A673 (cell line): ENCODE measurements at regions of chr6 and their contacts with region 1.

Region 1: DNA sequence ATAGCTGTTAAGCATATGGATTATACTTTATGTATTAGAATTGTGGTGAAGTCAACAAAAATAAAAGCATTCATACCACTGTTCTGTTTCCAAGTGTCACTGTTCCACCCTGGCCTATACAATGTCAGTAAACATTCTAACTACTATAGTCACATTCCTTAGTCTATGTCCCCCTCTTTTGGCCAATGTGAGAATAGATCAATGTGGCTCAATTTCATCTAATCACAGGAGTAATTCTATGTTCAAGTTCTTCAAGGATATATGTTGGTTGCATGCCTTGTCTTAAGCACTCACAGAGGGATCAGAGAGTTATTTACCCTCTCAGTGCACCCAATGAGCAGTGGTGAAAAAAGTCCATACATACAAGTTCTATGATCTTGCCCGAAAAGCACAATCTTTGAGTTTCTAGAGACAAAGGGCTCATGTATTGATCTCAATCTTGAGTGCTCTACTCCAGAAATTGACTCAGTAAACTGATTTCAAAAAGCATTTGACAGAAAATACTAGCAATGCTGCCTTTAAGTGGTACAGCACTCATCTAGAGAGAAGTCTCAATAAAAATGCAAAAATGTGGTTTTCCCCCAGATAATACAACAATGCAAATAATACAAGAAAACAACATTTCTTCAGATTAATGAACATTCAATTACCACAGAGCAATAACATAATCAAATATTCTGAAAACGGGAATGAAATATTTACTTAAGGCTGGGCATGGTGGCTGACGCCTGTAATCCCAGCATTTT is 16.5 kb downstream of the SMLR1 start:
- DNase-seq: peak; percentile 75
- H3K4me3 ChIP-seq: no peak overlapping the region
- H3K27ac ChIP-seq: no peak overlapping the region
- H3K4me1 ChIP-seq: no peaks in the 10 kb centered on the region
- H3K27me3 ChIP-seq: no peaks in the 10 kb centered on the region
- CTCF ChIP-seq: peak; percentile 68

Region 2: GRCh38 chr6:130037207-130037811 is 806.4 kb before region 1 on chr6:
- CTCF ChIA-PET with region 1: no interaction called
- POLR2A ChIA-PET with region 1: no interaction called
- intact Hi-C with region 1: loop called (anchors 10 kb)
- DNase-seq: peak; percentile 22
- H3K4me3 ChIP-seq: no peak overlapping the region
- H3K27ac ChIP-seq: no peak overlapping the region
- H3K4me1 ChIP-seq: peaks cover 13% of the 10 kb centered on the region
- H3K27me3 ChIP-seq: no peaks in the 10 kb centered on the region
- CTCF ChIP-seq: peak; percentile 64

Region 3: DNA sequence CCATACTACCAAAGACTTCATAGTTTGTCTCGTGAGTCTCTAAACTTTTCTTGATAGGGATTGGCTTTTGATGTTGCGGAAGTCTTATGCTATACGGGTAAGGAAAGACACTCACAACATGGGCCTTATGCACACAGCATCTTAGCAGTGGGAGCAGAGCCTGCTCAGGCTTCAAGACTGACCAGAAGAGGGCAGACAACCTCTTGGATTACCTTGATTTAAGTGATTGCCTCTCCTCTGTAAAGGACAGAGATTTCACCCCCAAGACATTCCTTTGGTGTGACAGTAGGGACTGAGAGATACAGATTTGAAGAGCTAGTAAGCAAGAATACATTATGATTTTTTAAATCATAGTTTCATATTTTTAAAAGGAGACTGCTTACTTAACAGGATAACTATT is 549.9 kb before region 1 on chr6:
- CTCF ChIA-PET with region 1: no interaction called
- POLR2A ChIA-PET with region 1: no interaction called
- intact Hi-C with region 1: loop called (anchors 5 kb)
- DNase-seq: peak; percentile 61
- H3K4me3 ChIP-seq: no peak overlapping the region
- H3K27ac ChIP-seq: no peak overlapping the region
- H3K4me1 ChIP-seq: no peaks in the 10 kb centered on the region
- H3K27me3 ChIP-seq: no peaks in the 10 kb centered on the region
- CTCF ChIP-seq: peak; percentile 70